B cell (primary cell): ENCODE measurements at regions of chr6 and their contacts with region 1.

Region 1: GRCh38 chr6:73309769-73310502 is 44.1 kb downstream of the DPPA5 start:
- DNase-seq: peak; percentile 69
- ATAC-seq: peak; percentile 94
- H3K4me3 ChIP-seq: peak overlapping the region; percentile 73 to 92 (median 88)
- H3K4me3 Mint-ChIP-seq: peak overlapping the region; percentile 98
- H3K27ac ChIP-seq: peak overlapping the region; percentile 39 to 65
- H3K27ac Mint-ChIP-seq: peak overlapping the region; percentile 87
- H3K4me1 ChIP-seq: peaks cover 11 to 13% of the 10 kb centered on the region in 2 donors
- H3K4me1 Mint-ChIP-seq: peaks cover 22% of the 10 kb centered on the region
- H3K27me3 ChIP-seq: peaks cover 0 to 9% (median 4%) of the 10 kb centered on the region in 4 experiments
- H3K27me3 Mint-ChIP-seq: peaks cover 10% of the 10 kb centered on the region
- CTCF ChIP-seq: peak; percentile 60

Region 2: DNA sequence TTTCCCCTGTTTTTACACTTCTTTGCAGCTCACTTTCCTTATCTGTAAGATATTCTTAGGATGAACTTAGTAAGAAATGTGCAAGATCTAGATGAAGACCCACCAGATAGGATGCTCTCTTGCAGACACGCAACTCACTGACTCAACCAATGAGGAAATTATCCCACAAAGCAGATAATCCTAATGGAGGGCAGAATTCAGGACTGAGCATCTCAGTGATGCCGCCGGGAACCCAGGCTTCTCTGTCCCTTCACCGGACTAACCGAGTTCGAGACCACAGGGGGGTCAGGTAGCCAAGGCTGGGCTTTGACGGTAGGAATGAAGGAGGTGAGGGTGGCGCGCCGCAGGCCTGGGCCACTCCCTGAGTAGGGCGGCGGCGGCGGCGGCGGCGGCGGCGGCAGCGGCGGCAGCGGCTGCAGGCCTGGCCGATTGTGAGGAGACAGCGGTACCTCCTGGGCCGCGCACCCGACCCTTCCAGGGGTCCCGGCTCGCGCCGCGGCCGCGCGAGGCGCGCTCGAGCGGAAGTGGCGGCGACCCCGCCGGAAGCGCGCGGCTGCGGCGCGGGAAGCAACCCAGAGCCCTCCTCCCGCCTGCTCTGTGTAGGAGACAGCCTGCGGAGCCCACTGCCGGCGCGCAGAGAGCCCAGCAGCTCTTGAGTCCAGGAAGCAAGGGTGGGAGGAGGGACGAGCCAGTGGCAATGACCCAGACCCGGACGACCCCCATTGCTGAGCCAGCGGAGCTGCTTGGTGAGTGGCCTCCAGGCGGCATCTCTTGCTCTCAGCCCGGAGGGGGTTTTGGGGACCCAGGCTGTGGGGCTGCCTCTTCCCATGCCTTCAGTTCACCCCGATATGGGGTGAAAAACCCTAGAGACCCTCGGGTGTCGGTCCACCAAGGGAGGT is 47.0 kb before region 1 on chr6 and contains the start of gene KHDC1:
- CTCF ChIA-PET with region 1: no interaction called
- POLR2A ChIA-PET with region 1: no interaction called
- intact Hi-C with region 1: loop called (anchors 1 kb)
- DNase-seq: peak; percentile 67
- ATAC-seq: peak; percentile 82
- H3K4me3 ChIP-seq: peak within 1 kb of the TSS; percentile 32 to 92 (median 82)
- H3K4me3 Mint-ChIP-seq: peak within 1 kb of the TSS; percentile 83
- H3K27ac ChIP-seq: peak within 1 kb of the TSS; percentile 20 to 51
- H3K27ac Mint-ChIP-seq: peak within 1 kb of the TSS; percentile 57
- H3K4me1 ChIP-seq: peaks cover 5 to 16% of the 10 kb centered on the region in 2 donors
- H3K4me1 Mint-ChIP-seq: peaks cover 18% of the 10 kb centered on the region
- H3K27me3 ChIP-seq: no peaks in the 10 kb centered on the region
- H3K27me3 Mint-ChIP-seq: no peaks in the 10 kb centered on the region
- CTCF ChIP-seq: no peak
- total RNA-seq, gene KHDC1: 2.9 and 3.5 TPM in 2 replicates

Region 3: GRCh38 chr6:73341335-73341734 is 31.4 kb after region 1 on chr6:
- CTCF ChIA-PET with region 1: no interaction called
- POLR2A ChIA-PET with region 1: no interaction called
- intact Hi-C with region 1: loop called (anchors 1 kb)
- DNase-seq: no peak
- ATAC-seq: no peak
- H3K4me3 ChIP-seq: no peak overlapping the region
- H3K4me3 Mint-ChIP-seq: no peak overlapping the region
- H3K27ac ChIP-seq: no peak overlapping the region
- H3K27ac Mint-ChIP-seq: no peak overlapping the region
- H3K4me1 ChIP-seq: no peaks in the 10 kb centered on the region
- H3K4me1 Mint-ChIP-seq: no peaks in the 10 kb centered on the region
- H3K27me3 ChIP-seq: peaks cover 0 to 3% (median 0%) of the 10 kb centered on the region in 4 experiments
- H3K27me3 Mint-ChIP-seq: peaks cover 3% of the 10 kb centered on the region
- CTCF ChIP-seq: no peak

Region 4: DNA sequence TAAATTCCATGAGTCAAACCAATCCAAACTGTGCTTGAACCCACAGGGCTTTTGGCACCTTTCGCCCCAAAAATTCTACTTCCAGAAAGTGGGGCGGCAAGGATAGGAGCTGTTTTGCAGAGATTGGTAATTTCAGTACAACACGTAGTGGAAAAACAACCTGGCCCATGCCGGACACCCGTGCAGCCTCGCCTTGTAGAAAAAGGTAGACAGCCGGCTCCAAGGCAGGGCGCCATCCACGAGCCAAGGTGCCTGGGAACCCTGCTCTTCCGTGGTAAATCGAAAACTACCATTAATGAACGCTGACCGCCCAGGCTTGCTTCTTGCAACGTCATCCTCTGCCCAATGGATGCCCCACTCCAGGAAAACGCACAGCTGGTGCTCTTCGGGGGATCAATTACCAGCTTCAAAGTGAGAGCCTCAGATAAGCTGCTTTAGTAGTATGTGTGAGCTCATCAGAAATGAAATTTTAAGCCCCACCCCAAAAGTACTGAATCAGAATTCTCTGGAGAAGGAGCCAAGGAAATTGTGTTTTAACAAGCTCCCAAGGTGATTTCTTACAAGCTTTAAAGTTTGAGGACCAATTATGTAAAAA is 57.9 kb after region 1 on chr6:
- CTCF ChIA-PET with region 1: no interaction called
- POLR2A ChIA-PET with region 1: no interaction called
- intact Hi-C with region 1: no loop called
- DNase-seq: no peak
- ATAC-seq: no peak
- H3K4me3 ChIP-seq: no peak overlapping the region
- H3K4me3 Mint-ChIP-seq: no peak overlapping the region
- H3K27ac ChIP-seq: no peak overlapping the region
- H3K27ac Mint-ChIP-seq: no peak overlapping the region
- H3K4me1 ChIP-seq: no peaks in the 10 kb centered on the region
- H3K4me1 Mint-ChIP-seq: no peaks in the 10 kb centered on the region
- H3K27me3 ChIP-seq: no peaks in the 10 kb centered on the region
- H3K27me3 Mint-ChIP-seq: peaks cover 7% of the 10 kb centered on the region
- CTCF ChIP-seq: no peak